ENCODE measurements at regions of chr5 and their contacts with region 1.

Region 1: DNA sequence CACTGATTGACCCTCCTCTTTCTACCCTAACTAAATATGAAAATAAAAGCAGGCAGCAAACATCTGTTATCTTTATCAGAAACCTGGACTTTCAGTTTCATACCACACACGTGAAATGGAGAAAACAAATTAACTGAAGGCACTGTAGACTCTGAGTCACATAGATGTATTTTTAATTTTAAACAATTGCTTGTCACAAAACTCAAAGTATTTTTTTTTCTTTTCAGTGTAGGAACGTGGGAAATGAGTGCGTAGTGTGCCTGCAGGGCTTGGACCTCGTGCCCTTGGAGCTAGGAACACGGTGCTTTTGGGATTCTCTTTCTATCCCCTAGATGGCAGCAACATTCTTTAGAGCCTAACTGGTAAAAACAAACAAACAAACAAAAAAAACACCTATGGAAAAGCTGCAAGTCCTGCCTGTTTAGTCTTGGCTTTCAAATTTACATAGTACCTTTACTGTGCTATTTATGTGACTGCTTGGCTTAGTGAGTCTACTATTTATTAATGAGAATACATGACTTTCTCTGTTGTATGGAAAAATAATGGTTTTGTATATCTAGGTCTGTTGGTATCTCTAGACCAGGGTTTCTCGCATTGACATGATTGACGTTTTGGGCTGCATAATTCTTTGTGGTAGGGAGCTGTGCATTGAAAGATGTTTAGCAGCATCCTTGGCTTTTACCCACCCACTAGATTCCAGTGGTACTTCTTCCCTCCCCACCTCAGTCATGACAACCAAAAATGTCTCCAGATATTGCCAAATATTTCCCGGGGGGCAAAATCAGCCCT is 16.8 kb upstream of the ACTBL2 start:
- DNase-seq: peak; percentile 74
- H3K4me3 Mint-ChIP-seq: peak overlapping the region; percentile 73
- H3K27ac Mint-ChIP-seq: peak overlapping the region; percentile 59
- H3K4me1 Mint-ChIP-seq: peaks cover 34% of the 10 kb centered on the region
- H3K27me3 Mint-ChIP-seq: peaks cover 5% of the 10 kb centered on the region

Region 2: GRCh38 chr5:57324181-57324580 is 175.3 kb before region 1 on chr5:
- intact Hi-C with region 1: loop called (anchors 2 kb)
- DNase-seq: no peak
- H3K4me3 Mint-ChIP-seq: no peak overlapping the region
- H3K27ac Mint-ChIP-seq: peak overlapping the region; percentile 82
- H3K4me1 Mint-ChIP-seq: peaks cover 10% of the 10 kb centered on the region
- H3K27me3 Mint-ChIP-seq: no peaks in the 10 kb centered on the region

Region 3: DNA sequence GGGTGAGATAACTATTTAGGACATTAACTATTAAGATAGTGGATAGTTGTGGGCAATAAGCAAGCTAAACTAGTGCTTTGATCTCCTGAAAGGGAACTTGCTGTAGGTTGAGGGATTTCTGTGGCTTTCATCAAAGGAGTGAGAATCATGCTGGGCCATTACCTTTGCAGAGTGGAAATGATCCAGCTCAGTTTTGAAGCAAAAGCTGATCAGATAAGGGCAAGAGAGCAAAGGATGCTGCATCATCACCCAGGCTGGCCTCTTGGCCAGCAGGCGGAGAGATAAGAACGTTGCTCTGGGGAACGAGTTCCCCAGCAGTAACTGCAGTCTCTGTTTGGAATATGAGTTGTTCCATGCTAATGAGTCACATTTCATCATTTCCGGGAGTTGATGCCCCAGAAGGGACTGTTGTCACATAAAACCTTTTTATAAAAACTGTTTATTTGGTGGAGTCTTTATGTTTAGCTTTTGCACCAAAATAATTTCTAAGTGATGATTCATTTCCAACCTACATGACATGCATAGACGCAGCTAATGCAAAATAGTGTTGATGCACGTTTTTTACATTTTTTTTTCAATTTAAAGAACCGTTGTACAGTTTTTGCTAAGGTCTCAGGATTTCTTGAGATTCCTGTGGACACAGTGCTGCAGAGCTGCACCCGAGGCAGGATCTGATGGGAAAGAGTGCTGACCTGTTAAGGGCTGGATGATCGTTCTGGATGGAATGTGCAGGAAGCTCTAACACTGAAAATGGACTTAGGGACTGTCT is 116.2 kb before region 1 on chr5:
- intact Hi-C with region 1: loop called (anchors 1 kb)
- DNase-seq: peak; percentile 80
- H3K4me3 Mint-ChIP-seq: peak overlapping the region; percentile 25
- H3K27ac Mint-ChIP-seq: peak overlapping the region; percentile 76
- H3K4me1 Mint-ChIP-seq: peaks cover 9% of the 10 kb centered on the region
- H3K27me3 Mint-ChIP-seq: no peaks in the 10 kb centered on the region

Region 4: GRCh38 chr5:57468481-57469163 is 30.8 kb before region 1 on chr5:
- intact Hi-C with region 1: no loop called
- DNase-seq: no peak
- H3K4me3 Mint-ChIP-seq: no peak overlapping the region
- H3K27ac Mint-ChIP-seq: no peak overlapping the region
- H3K4me1 Mint-ChIP-seq: no peaks in the 10 kb centered on the region
- H3K27me3 Mint-ChIP-seq: peaks cover 11% of the 10 kb centered on the region

Region 5: DNA sequence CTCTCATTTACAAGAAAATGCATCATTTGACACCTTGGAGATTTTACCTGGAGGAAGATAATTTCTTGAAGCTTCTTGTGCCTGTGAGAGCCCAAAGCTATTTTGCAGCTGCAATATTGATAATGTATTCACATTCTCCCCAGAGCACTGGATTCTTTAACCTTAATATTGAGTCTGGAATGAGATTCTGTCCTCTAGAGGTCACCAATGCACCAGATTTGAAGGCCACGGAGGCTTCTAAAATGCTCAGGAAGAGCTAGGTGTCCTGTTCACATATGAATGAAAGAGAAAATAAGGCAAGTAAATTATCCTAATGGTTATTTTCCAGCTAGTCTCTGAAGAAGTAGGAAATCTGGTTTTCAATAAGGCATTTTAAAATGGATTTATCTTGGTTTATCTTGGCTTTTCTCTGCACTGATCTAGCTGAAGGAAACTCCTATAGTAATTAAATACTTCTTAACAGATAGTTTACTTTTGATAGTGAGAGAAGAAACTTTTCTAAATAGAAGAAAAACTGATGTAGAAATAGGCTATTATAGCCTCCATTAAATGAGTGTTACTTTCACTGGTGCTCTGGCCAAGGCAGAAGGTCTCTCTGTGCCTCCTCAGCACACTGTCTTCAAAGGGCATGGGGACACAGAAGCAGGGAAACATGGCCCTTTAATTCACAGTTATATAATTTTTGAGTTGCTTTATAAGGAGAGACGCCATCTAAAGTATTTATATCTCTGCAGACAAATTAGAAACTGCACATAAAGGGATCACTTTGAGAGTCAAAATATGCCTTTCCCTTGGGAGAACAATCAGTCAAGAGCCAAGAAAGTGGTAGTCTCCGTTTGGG is 280.1 kb after region 1 on chr5:
- intact Hi-C with region 1: loop called (anchors 5 kb)
- DNase-seq: peak; percentile 71
- H3K4me3 Mint-ChIP-seq: no peak overlapping the region
- H3K27ac Mint-ChIP-seq: no peak overlapping the region
- H3K4me1 Mint-ChIP-seq: no peaks in the 10 kb centered on the region
- H3K27me3 Mint-ChIP-seq: peaks cover 11% of the 10 kb centered on the region

Measured in activated CD4-positive, alpha-beta T cell treated with anti-CD3 and anti-CD28 coated beads, Interleukin-2, amount 10 ng/mL, durations not matched to agents 24 days and 14 days (primary cell).